Activated CD8-positive, alpha-beta T cell treated with anti-CD3 and anti-CD28 coated beads for 36 hours (primary cell): ENCODE measurements at regions of chr12 and their contacts with region 1.

Region 1: DNA sequence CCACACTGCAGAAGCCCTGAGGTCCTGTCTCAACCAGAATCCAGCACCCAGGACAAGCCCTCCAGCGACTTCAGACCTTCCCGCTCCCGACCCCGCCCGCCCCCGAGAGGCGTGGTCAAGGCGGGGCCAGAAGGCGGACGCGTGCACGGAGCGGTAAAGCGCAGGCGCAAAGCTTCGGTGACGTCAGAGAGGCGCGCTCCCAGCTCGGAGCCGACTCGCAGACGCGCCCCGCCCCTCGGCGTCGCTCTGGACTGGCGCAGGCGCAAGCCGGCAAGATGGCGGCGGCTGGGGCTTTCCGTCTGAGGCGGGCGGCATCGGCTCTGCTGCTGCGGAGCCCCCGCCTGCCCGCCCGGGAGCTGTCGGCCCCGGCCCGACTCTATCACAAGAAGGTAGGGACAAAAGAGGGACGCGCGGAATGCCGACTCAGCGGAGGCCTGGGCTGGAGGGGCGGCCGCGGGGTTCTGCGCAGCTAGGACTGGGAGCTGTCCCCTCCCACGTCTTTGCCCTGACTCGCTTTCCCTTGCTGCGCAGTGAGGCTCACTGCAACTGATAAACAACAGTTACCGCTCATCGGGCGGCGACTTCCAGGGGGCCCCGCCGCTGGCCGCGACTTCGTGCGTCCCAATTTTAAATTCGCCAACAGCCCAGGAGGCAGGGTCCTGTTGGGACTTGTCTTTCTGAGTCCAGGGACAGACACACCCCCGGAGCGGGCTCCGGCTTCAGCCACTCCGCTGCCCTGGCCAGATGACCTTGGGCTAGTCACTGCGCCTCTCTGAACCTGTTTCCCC is at the start of gene ISCU:
- DNase-seq: peak; percentile 97
- ATAC-seq: peak; percentile 76
- H3K4me3 Mint-ChIP-seq: peak within 1 kb of the TSS; percentile 99
- H3K27ac Mint-ChIP-seq: peak within 1 kb of the TSS; percentile 100
- H3K4me1 Mint-ChIP-seq: peaks cover 55% of the 10 kb centered on the region
- H3K27me3 Mint-ChIP-seq: no peaks in the 10 kb centered on the region
- CTCF ChIP-seq: no peak
- total RNA-seq, gene ISCU: 69.4 to 70.5 TPM

Region 2: GRCh38 chr12:107818984-107819383 is 743.6 kb before region 1 on chr12:
- CTCF ChIA-PET with region 1: no interaction called
- POLR2A ChIA-PET with region 1: no interaction called
- intact Hi-C with region 1: no loop called
- DNase-seq: no peak
- ATAC-seq: no peak
- H3K4me3 Mint-ChIP-seq: no peak overlapping the region
- H3K27ac Mint-ChIP-seq: no peak overlapping the region
- H3K4me1 Mint-ChIP-seq: no peaks in the 10 kb centered on the region
- H3K27me3 Mint-ChIP-seq: peaks cover 2% of the 10 kb centered on the region
- CTCF ChIP-seq: no peak

Region 3: DNA sequence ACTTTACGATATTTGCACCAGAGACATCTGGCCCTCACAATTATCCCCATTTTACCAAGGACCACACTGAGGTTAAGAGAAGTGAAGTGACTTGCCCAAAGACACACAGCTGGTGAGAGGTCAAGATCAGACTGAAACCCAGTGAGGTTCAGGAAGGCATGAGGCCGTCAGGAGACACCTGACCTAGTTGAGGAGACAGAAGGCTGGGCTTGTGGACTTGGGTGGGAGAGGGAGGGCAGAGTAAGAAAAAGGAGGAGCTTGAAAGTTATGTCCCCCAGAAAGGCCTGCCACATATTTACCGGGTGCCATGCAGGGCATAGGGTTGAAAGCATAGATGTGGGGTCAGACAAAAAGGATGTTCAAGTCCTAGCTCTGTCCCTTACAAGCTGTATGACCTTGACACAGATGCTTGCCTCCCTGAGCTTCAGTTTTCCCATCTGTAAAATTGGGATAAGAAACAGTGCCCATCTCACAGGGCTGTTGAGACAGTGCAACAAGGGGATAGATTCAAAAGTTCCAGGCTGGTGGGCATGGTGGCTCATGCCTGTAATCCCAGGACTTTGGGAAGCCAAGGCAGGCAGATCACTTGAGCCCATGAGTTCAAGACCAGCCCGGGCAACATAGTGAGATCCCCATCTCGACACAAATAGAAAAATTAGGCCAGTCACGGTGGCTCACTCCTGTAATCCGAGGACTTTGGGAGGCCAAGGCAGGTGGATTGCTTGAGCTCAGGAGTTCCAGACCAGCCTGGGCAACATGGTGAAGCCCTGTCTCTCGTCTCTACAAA is 64.8 kb after region 1 on chr12:
- CTCF ChIA-PET with region 1: interaction called, 645 read pairs
- POLR2A ChIA-PET with region 1: interaction called, 225 read pairs
- intact Hi-C with region 1: loop called (anchors 2 kb)
- DNase-seq: no peak
- ATAC-seq: no peak
- H3K4me3 Mint-ChIP-seq: peak overlapping the region; percentile 10
- H3K27ac Mint-ChIP-seq: peak overlapping the region; percentile 100
- H3K4me1 Mint-ChIP-seq: peaks cover 54% of the 10 kb centered on the region
- H3K27me3 Mint-ChIP-seq: no peaks in the 10 kb centered on the region
- CTCF ChIP-seq: no peak

Region 4: GRCh38 chr12:108633534-108634248 is 71.1 kb after region 1 on chr12 and contains the start of gene SELPLG:
- CTCF ChIA-PET with region 1: interaction called, 82 read pairs
- POLR2A ChIA-PET with region 1: interaction called, 225 read pairs
- intact Hi-C with region 1: loop called (anchors 2 kb)
- DNase-seq: peak; percentile 94
- ATAC-seq: peak; percentile 52
- H3K4me3 Mint-ChIP-seq: peak within 1 kb of the TSS; percentile 91
- H3K27ac Mint-ChIP-seq: peak within 1 kb of the TSS; percentile 100
- H3K4me1 Mint-ChIP-seq: peaks cover 62% of the 10 kb centered on the region
- H3K27me3 Mint-ChIP-seq: no peaks in the 10 kb centered on the region
- CTCF ChIP-seq: no peak
- total RNA-seq, gene SELPLG: 22.1 to 23.8 TPM

Region 5: DNA sequence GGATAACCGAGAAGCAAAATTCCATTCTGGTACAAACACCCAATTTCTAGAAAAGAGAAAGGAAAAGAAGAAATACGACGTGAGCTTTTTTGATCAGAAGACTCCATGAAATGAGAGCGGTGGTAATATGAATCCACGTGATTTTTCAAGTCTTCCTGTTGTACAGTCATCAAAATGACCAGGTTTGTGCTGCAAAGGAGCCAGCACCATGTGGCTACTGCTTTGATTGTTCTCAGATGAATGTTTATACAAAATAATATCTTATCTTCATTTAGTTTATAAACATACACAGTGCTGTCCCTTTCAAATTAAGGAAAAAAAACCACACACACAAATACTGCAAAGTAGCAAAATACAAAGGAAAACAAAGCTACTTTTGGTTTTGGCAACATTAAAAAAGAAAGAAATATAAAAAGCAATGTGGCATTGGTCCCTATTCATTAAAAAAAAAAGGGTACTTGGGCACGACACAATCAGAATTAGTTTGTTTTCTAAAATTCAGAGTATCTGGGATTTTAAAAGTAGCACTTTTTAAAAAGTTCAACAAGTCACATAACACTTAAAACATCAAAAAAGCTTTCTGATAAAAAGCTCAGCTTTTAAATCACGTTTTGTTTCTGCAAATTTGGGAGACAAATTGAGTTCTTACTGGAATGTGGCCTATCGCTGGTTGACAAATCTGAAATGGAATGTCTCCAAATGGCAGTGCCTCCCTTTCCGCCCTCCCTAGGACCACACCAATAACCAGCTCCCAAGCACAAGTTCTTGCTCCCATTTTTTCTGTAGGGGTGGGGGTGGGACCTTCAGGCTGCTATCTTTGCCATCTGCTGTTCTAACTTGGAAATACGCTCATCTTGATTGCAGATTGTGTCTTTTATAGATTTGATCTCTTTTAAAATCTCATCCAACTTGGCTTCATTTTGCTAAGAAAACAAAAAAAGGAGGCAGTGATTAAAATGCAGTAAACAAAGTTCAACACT is 84.3 kb after region 1 on chr12:
- CTCF ChIA-PET with region 1: interaction called, 11 read pairs
- POLR2A ChIA-PET with region 1: no interaction called
- intact Hi-C with region 1: no loop called
- DNase-seq: no peak
- ATAC-seq: peak; percentile 47
- H3K4me3 Mint-ChIP-seq: peak overlapping the region; percentile 25
- H3K27ac Mint-ChIP-seq: peak overlapping the region; percentile 62
- H3K4me1 Mint-ChIP-seq: peaks cover 31% of the 10 kb centered on the region
- H3K27me3 Mint-ChIP-seq: no peaks in the 10 kb centered on the region
- CTCF ChIP-seq: no peak